ENCODE measurements at regions of chr4 and their contacts with region 1.

Region 1: GRCh38 chr4:41882625-41883347 is 52.4 kb upstream of the TMEM33 start:
- DNase-seq: no peak
- ATAC-seq: peak; percentile 79
- H3K4me3 Mint-ChIP-seq: peak overlapping the region; percentile 57
- H3K27ac Mint-ChIP-seq: no peak overlapping the region
- H3K4me1 Mint-ChIP-seq: peaks cover 17% of the 10 kb centered on the region
- H3K27me3 Mint-ChIP-seq: peaks cover 54% of the 10 kb centered on the region
- CTCF ChIP-seq: peak; percentile 83

Region 2: GRCh38 chr4:41060352-41061334 is 822.1 kb before region 1 on chr4:
- CTCF ChIA-PET with region 1: no interaction called
- POLR2A ChIA-PET with region 1: no interaction called
- intact Hi-C with region 1: no loop called
- DNase-seq: no peak
- ATAC-seq: no peak
- H3K4me3 Mint-ChIP-seq: no peak overlapping the region
- H3K27ac Mint-ChIP-seq: no peak overlapping the region
- H3K4me1 Mint-ChIP-seq: no peaks in the 10 kb centered on the region
- H3K27me3 Mint-ChIP-seq: peaks cover 4% of the 10 kb centered on the region
- CTCF ChIP-seq: no peak

Region 3: GRCh38 chr4:41692717-41693345 is 190.0 kb before region 1 on chr4:
- CTCF ChIA-PET with region 1: interaction called, 3 read pairs
- POLR2A ChIA-PET with region 1: no interaction called
- intact Hi-C with region 1: loop called (anchors 1 kb)
- DNase-seq: no peak
- ATAC-seq: no peak
- H3K4me3 Mint-ChIP-seq: no peak overlapping the region
- H3K27ac Mint-ChIP-seq: no peak overlapping the region
- H3K4me1 Mint-ChIP-seq: no peaks in the 10 kb centered on the region
- H3K27me3 Mint-ChIP-seq: peaks cover 3% of the 10 kb centered on the region
- CTCF ChIP-seq: no peak

Region 4: GRCh38 chr4:41751449-41752061 is 131.2 kb before region 1 on chr4:
- CTCF ChIA-PET with region 1: no interaction called
- POLR2A ChIA-PET with region 1: no interaction called
- intact Hi-C with region 1: loop called (anchors 5 kb)
- DNase-seq: no peak
- ATAC-seq: no peak
- H3K4me3 Mint-ChIP-seq: no peak overlapping the region
- H3K27ac Mint-ChIP-seq: no peak overlapping the region
- H3K4me1 Mint-ChIP-seq: no peaks in the 10 kb centered on the region
- H3K27me3 Mint-ChIP-seq: peaks cover 60% of the 10 kb centered on the region
- CTCF ChIP-seq: no peak

Region 5: GRCh38 chr4:42396752-42397634 is 514.2 kb after region 1 on chr4 and contains the start of gene SHISA3:
- CTCF ChIA-PET with region 1: no interaction called
- POLR2A ChIA-PET with region 1: no interaction called
- intact Hi-C with region 1: loop called (anchors 5 kb)
- DNase-seq: no peak
- ATAC-seq: peak; percentile 40
- H3K4me3 Mint-ChIP-seq: peak within 1 kb of the TSS; percentile 89
- H3K27ac Mint-ChIP-seq: no peak within 1 kb of the TSS
- H3K4me1 Mint-ChIP-seq: peaks cover 39% of the 10 kb centered on the region
- H3K27me3 Mint-ChIP-seq: peaks cover 45% of the 10 kb centered on the region
- CTCF ChIP-seq: no peak
- total RNA-seq, gene SHISA3: not detected in 2 replicates

Region 6: GRCh38 chr4:43816116-43816515 is 1933.3 kb after region 1 on chr4:
- CTCF ChIA-PET with region 1: no interaction called
- POLR2A ChIA-PET with region 1: no interaction called
- intact Hi-C with region 1: no loop called
- DNase-seq: no peak
- ATAC-seq: no peak
- H3K4me3 Mint-ChIP-seq: no peak overlapping the region
- H3K27ac Mint-ChIP-seq: no peak overlapping the region
- H3K4me1 Mint-ChIP-seq: no peaks in the 10 kb centered on the region
- H3K27me3 Mint-ChIP-seq: no peaks in the 10 kb centered on the region
- CTCF ChIP-seq: no peak

Measured in activated B cell treated with CpG ODN at 0.5 μM for 24 hours (primary cell).